ENCODE measurements at regions of chr16 and their contacts with region 1.

Region 1: DNA sequence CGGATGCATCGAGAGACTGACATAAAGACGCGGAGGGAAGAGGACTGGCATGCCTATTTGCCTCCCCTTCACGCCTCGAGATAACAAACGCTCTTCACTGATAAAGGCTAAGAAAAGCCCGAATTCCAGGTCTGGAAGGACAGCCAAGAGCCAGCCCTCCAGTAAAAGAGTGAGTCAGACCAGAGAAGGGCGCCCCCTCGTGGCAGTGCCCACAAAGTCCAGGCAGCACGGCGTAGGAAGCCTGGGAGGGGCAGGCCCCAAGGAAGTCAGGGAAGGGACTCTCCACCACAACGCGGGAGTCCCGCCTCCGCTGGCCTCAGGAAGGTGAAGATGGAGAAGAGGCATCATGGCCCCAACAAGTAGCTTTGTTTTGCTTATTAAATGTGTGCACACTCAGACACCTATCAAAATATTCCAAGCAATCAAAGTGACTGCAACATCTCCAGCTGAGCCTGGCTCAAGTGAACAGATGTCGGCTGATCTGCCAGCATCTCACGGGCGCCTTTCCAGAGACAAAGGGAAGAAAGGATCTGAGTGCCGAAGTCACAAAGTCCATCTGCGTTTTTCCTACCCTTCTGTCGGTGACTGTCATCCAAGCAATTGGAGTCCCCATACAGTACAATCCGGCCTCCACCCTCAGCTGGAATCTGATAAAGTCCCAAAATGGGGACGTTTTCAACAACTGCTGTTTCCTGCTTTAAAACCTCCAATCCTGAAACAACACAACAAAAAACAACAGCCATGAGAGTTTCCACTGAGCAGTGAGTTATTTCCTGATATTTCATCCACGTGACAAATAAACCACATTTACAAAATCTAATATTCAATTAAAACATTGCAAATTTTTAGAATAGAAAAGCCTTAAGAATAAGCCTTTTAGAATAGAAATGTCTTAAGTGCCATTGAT is 20.4 kb upstream of the SLC38A8 start:
- DNase-seq: peak; percentile 75 to 98
- H3K4me3 ChIP-seq: no peak overlapping the region
- H3K27ac ChIP-seq: no peak overlapping the region
- H3K4me1 ChIP-seq: no peaks in the 10 kb centered on the region
- H3K27me3 ChIP-seq: no peaks in the 10 kb centered on the region
- CTCF ChIP-seq: peak; percentile 93 to 96 (median 96)
- EP300 ChIP-seq: no peak
- POLR2A ChIP-seq: no peak
- RAD21 ChIP-seq: peak; percentile 72 to 77

Region 2: GRCh38 chr16:83706394-83706793 is 356.6 kb before region 1 on chr16:
- CTCF ChIA-PET with region 1: no interaction called
- POLR2A ChIA-PET with region 1: no interaction called
- DNase-seq: no peak
- H3K4me3 ChIP-seq: no peak overlapping the region
- H3K27ac ChIP-seq: no peak overlapping the region
- H3K4me1 ChIP-seq: 0 out of 7 replicates have a peak, but pooled peaks cover 0 to 4% (median 0%) of the 10 kb centered on the region in 4 experiments
- H3K27me3 ChIP-seq: no peaks in the 10 kb centered on the region
- CTCF ChIP-seq: no peak
- EP300 ChIP-seq: no peak
- POLR2A ChIP-seq: no peak
- RAD21 ChIP-seq: no peak

Region 3: GRCh38 chr16:83863682-83864081 is 199.3 kb before region 1 on chr16:
- CTCF ChIA-PET with region 1: no interaction called
- POLR2A ChIA-PET with region 1: no interaction called
- DNase-seq: no peak
- H3K4me3 ChIP-seq: no peak overlapping the region
- H3K27ac ChIP-seq: no peak overlapping the region
- H3K4me1 ChIP-seq: peaks cover 0 to 8% (median 3%) of the 10 kb centered on the region in 4 experiments; a peak in 4 of 7 replicates
- H3K27me3 ChIP-seq: no peaks in the 10 kb centered on the region
- CTCF ChIP-seq: no peak
- EP300 ChIP-seq: no peak
- POLR2A ChIP-seq: no peak
- RAD21 ChIP-seq: no peak

Region 4: DNA sequence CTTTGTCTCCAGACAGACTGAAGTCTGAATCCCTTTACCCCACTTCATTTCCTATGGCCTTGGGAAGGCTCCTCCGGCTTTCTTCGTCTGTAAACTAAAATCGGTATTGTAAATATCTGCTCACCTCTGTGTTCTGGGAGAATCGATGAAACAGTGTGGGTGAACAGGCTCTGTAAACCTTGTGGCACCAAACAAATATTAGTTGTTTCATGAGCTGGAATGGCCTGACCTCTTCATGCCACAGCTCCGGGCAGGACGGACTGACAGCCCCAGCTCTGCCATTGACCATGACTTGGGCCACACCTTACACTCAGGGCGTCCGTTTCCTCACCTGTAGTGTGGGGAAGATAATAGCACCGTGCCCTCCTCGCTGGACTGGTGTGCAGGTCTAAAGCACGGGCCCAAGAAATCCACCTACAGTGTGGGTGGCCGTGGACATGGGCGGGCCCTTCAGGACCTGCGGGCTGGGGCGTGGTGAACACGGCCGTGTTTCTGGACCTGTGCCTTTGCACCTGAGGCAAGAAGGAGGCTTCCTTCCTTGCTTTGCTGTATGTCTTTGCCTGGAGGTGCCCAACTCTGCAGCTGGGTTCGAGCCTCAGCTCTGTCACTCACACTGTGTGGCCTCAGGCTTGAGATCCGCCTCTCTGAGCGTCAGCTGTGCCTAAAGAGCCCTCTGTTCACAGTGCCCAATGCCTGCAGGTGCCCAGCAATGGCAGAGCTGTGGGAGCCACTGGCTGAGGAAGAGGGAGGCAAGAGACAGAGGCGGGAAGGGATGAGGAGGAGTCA is 116.0 kb before region 1 on chr16:
- CTCF ChIA-PET with region 1: interaction called, 366 read pairs
- POLR2A ChIA-PET with region 1: no interaction called
- DNase-seq: no peak
- H3K4me3 ChIP-seq: no peak overlapping the region
- H3K27ac ChIP-seq: no peak overlapping the region
- H3K4me1 ChIP-seq: no peaks in the 10 kb centered on the region
- H3K27me3 ChIP-seq: no peaks in the 10 kb centered on the region; a peak in 1 of 7 replicates
- CTCF ChIP-seq: no peak
- EP300 ChIP-seq: no peak
- POLR2A ChIP-seq: no peak
- RAD21 ChIP-seq: no peak

Region 5: DNA sequence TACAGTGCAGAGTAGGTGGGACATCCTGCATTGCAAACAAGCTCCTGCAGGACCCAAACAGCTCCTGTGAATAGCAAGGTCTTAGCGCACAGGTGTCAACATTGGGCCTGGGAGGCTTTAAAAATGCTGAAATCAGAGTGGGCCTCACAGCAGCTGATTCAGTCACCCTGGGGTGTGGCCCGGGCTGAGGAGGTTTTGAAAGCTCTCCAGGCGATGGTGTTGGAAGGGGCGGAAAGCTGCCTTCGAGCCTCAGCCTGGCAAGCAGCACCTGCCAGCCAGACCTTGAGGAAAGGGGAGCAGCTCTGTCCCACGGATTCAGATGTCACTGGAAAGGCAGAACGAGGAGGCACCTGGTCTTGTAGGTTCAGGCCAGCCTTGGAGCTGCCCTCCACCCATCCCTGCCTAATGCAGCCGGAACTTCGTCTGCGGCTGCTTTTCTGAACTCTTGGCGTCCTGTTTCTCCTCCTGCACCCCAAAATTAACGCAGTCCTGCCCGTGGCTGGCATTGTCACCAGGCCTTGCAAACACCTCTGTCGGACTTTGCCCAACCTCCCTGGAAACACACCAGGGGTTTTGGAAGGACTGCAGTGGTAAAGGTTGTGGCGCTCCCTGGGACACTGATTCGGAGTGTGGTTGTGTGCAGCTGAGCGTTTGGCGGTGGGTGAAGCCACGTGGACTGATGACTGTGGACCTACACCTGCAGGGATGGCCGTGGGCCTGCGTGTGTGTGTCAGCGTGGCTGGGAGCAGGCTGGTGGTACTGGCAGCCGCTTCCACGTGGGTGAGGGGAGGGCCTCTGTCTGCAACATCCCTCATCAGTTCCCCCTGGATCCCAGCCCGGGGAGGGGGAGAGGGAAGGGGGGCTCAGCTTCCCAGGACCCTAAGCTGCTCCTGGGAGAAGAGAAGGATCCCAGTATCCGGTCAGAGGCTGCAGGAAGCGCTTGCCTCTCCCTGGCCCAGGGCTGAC is 91.5 kb before region 1 on chr16:
- CTCF ChIA-PET with region 1: interaction called, 366 read pairs
- POLR2A ChIA-PET with region 1: no interaction called
- DNase-seq: no peak
- H3K4me3 ChIP-seq: no peak overlapping the region
- H3K27ac ChIP-seq: no peak overlapping the region
- H3K4me1 ChIP-seq: peaks cover 0 to 11% (median 8%) of the 10 kb centered on the region in 4 experiments; a peak in 6 of 7 replicates
- H3K27me3 ChIP-seq: peaks cover 0 to 13% (median 9%) of the 10 kb centered on the region in 4 experiments; a peak in 6 of 7 replicates
- CTCF ChIP-seq: no peak
- EP300 ChIP-seq: no peak
- POLR2A ChIP-seq: no peak
- RAD21 ChIP-seq: no peak

Region 6: GRCh38 chr16:83980794-83981193 is 82.2 kb before region 1 on chr16:
- CTCF ChIA-PET with region 1: interaction called, 18 read pairs
- POLR2A ChIA-PET with region 1: no interaction called
- DNase-seq: no peak
- H3K4me3 ChIP-seq: no peak overlapping the region
- H3K27ac ChIP-seq: no peak overlapping the region
- H3K4me1 ChIP-seq: no peaks in the 10 kb centered on the region
- H3K27me3 ChIP-seq: no peaks in the 10 kb centered on the region
- CTCF ChIP-seq: no peak
- EP300 ChIP-seq: no peak
- POLR2A ChIP-seq: no peak
- RAD21 ChIP-seq: no peak

Region 7: DNA sequence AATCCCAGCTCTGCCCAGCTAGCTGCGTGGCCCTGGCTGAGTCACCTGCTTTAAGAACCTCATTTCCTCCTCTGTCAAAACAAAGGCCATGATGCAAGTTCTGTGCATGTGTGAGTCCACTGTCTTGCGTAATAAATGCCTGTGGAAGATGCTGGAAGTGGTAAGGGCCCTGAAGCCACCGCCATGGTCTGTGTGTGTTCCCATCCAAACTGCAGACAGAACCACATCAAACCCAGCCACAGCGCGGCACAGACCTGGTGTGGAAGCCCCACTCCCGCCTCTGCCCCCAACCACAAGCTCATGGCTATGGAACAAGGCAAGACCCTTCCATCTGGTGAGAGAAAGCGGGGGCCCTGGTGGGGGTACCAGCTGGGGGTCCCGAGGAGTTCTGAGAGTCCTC is 68.9 kb before region 1 on chr16:
- CTCF ChIA-PET with region 1: interaction called, 16 read pairs
- POLR2A ChIA-PET with region 1: no interaction called
- DNase-seq: no peak
- H3K4me3 ChIP-seq: no peak overlapping the region
- H3K27ac ChIP-seq: no peak overlapping the region
- H3K4me1 ChIP-seq: peaks cover 2 to 12% (median 7%) of the 10 kb centered on the region in 4 experiments; a peak in 5 of 7 replicates
- H3K27me3 ChIP-seq: no peaks in the 10 kb centered on the region
- CTCF ChIP-seq: no peak
- EP300 ChIP-seq: no peak
- POLR2A ChIP-seq: no peak
- RAD21 ChIP-seq: no peak

Region 8: DNA sequence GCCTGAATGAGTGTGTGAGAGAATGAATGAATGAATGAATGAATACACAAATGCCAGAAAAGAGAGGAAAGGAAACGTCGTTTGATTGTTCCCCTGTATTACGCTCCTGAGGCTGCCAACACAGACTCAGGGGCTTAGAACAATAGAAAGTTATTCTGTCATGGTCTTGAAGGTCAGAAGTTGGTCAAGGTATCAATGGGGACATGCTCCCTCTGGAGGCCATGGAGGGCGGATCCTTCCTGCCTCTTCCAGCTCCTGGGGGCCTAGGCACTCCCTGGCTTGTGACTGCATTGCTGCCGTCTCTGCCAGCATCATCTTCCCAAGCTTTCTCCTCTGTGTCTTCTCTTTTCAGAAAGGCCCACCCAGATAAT is 18.9 kb before region 1 on chr16:
- CTCF ChIA-PET with region 1: interaction called, 134 read pairs
- POLR2A ChIA-PET with region 1: interaction called, 3 read pairs
- DNase-seq: peak in 1 of 2 experiments; percentile 19
- H3K4me3 ChIP-seq: no peak overlapping the region
- H3K27ac ChIP-seq: no peak overlapping the region
- H3K4me1 ChIP-seq: peaks cover 0 to 12% (median 9%) of the 10 kb centered on the region in 4 experiments; a peak in 6 of 7 replicates
- H3K27me3 ChIP-seq: no peaks in the 10 kb centered on the region; a peak in 1 of 7 replicates
- CTCF ChIP-seq: peak; percentile 61 to 76 (median 76)
- EP300 ChIP-seq: no peak
- POLR2A ChIP-seq: no peak
- RAD21 ChIP-seq: peak; percentile 66 to 69

Region 9: DNA sequence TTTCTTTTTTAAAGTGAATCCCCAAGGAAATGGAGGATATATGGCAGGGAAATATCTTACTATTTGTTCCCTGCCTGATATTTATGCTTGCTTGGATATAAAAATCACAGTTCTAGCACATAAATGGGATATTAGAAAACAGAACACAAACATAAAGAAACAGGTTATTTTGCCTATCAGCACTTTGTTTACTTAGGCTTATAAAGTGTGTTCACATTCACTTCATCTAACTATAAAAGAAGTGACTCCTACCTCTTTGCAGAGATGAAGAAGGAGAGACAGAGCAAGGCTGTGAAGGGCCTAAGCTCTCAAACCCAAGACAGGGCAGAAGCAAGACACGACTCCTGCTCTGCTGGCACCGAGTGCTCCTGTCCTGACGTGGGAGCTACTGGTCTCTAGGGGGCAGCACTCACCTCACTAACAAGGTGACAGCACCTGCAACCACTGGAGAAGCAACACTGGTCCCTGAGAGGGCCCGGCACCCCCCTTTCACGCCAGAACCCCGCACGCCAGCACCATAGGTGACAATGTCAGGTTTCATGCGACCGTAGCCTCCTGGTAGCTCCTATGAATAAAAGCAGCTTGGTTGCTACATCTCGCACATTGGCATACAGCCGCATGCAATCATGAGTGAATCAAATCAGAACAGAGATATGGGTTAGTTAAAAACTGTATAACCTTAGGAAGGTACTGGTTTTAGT is 21.7 kb after region 1 on chr16:
- CTCF ChIA-PET with region 1: interaction called, 32 read pairs
- POLR2A ChIA-PET with region 1: no interaction called
- DNase-seq: peak; percentile 49 to 80
- H3K4me3 ChIP-seq: no peak overlapping the region
- H3K27ac ChIP-seq: no peak overlapping the region
- H3K4me1 ChIP-seq: no peaks in the 10 kb centered on the region
- H3K27me3 ChIP-seq: no peaks in the 10 kb centered on the region
- CTCF ChIP-seq: peak; percentile 88 to 97 (median 97)
- EP300 ChIP-seq: no peak
- POLR2A ChIP-seq: no peak
- RAD21 ChIP-seq: peak; percentile 72 to 79

Region 10: DNA sequence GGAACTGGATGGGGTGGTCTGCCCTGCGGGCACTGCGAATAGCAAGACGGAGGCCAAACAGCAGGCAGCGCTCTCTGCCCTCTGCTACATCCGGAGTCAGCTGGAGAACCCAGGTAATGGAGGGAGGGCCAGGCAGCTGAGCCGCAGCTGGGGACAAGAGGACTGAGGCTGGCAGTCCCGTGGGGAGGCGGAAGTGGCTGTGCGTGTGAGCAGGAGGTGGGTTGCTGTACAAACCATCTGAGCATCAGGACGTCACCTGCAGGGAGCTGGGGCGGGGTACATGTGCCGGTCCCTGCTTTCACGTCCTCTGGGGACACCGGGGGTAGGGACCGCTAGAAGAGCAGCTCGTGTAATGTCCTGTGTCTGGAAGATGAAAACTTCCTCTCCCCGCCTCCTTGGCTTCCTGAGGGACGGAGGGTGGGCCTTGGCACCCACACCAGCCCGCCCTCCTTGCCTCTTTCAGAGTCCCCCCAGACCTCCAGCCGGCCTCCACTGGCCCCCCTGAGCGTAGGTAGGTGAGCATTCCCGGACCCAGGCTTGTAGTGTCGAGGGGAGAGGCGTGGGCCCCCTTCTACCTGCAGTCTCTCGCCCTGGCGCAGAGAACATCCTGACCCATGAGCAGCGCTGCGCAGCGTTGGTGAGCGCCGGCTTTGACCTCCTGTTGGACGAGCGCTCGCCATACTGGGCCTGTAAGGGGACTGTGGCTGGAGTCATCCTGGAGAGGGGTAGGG is 131.6 kb after region 1 on chr16:
- CTCF ChIA-PET with region 1: no interaction called
- POLR2A ChIA-PET with region 1: no interaction called
- DNase-seq: no peak
- H3K4me3 ChIP-seq: no peak overlapping the region
- H3K27ac ChIP-seq: no peak overlapping the region
- H3K4me1 ChIP-seq: peaks cover 0 to 3% (median under 1%) of the 10 kb centered on the region in 4 experiments; a peak in 3 of 7 replicates
- H3K27me3 ChIP-seq: no peaks in the 10 kb centered on the region
- CTCF ChIP-seq: peak; percentile 8 to 33 (median 21); a peak in 3 of 4 replicates
- EP300 ChIP-seq: no peak
- POLR2A ChIP-seq: no peak
- RAD21 ChIP-seq: peak; percentile 51 to 60

Region 11: DNA sequence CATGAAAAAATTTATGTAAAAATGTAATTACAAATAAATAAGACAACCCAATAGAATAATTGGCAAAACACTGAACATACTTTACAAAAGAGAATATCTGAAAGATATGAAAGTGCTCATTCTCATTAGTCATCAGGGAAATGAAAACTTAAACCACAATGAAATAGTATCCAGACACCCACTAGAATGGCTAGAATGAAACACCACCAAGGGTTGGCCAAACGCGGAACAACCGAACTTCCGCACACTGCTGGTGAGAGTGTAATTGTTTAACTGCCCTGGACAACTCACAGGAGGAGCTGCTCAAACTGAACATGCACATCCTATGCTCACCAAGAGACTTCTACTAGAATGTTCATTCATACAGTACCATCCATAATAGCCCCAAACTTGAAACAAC is 954.2 kb after region 1 on chr16:
- CTCF ChIA-PET with region 1: no interaction called
- POLR2A ChIA-PET with region 1: no interaction called
- DNase-seq: no peak
- H3K4me3 ChIP-seq: no peak overlapping the region
- H3K27ac ChIP-seq: no peak overlapping the region
- H3K4me1 ChIP-seq: no peaks in the 10 kb centered on the region; a peak in 1 of 7 replicates
- H3K27me3 ChIP-seq: no peaks in the 10 kb centered on the region
- CTCF ChIP-seq: no peak
- EP300 ChIP-seq: no peak
- POLR2A ChIP-seq: no peak
- RAD21 ChIP-seq: no peak